Caco-2 (cell line): ENCODE measurements at regions of chrX and their contacts with region 1.

Region 1: DNA sequence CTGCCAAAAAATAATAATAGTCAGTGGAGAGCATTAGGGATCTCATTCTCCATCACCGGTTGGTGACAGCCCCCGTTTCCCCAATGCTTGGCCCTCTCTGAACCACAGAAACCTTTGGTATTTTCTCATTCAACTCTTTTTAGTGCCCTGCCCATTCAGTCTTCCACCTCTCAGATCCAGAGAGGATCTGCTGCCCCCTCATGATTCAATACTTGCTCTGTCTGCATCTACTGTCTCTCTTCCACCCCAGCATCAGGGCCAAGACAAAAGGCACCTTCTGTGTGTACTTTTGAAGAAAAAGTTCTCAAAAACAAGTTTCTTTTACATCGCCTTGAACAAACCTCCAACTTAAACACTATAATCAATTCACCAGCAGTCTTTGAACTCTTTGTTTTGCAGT is 19.3 kb downstream of the CLTRN start:
- DNase-seq: peak in 1 of 2 experiments; percentile 2
- H3K4me3 ChIP-seq: no peak overlapping the region
- H3K4me3 Mint-ChIP-seq: no peak overlapping the region
- H3K27ac Mint-ChIP-seq: no peak overlapping the region
- H3K4me1 ChIP-seq: no peaks in the 10 kb centered on the region
- H3K4me1 Mint-ChIP-seq: no peaks in the 10 kb centered on the region
- H3K27me3 ChIP-seq: no peaks in the 10 kb centered on the region
- H3K27me3 Mint-ChIP-seq: no peaks in the 10 kb centered on the region
- CTCF ChIP-seq: no peak

Region 2: DNA sequence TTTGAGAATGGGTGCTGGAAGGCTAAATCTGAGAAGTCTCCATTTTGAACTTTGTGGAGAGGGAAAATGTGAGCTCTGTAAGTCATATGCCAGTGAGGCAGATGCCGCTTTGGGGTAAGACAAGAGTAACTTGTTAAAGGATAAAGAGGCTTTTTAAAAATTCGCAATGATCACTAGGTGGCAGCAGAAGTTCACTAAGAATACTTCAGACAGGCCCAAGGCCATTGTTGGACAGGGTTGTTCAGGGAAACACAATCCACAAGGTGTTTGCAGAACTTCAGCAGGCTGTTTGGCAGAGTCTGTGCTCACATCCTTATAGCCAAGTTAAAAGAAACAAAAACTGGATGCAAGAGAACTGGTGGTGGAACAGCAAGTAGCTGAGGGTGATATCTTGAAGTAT is 296.2 kb before region 1 on chrX:
- CTCF ChIA-PET with region 1: no interaction called
- POLR2A ChIA-PET with region 1: no interaction called
- intact Hi-C with region 1: loop called (anchors 10 kb)
- DNase-seq: peak; percentile 38 to 49
- H3K4me3 ChIP-seq: no peak overlapping the region
- H3K4me3 Mint-ChIP-seq: no peak overlapping the region
- H3K27ac Mint-ChIP-seq: no peak overlapping the region
- H3K4me1 ChIP-seq: no peaks in the 10 kb centered on the region
- H3K4me1 Mint-ChIP-seq: no peaks in the 10 kb centered on the region
- H3K27me3 ChIP-seq: no peaks in the 10 kb centered on the region
- H3K27me3 Mint-ChIP-seq: peaks cover 6% of the 10 kb centered on the region
- CTCF ChIP-seq: peak; percentile 24 to 29

Region 3: DNA sequence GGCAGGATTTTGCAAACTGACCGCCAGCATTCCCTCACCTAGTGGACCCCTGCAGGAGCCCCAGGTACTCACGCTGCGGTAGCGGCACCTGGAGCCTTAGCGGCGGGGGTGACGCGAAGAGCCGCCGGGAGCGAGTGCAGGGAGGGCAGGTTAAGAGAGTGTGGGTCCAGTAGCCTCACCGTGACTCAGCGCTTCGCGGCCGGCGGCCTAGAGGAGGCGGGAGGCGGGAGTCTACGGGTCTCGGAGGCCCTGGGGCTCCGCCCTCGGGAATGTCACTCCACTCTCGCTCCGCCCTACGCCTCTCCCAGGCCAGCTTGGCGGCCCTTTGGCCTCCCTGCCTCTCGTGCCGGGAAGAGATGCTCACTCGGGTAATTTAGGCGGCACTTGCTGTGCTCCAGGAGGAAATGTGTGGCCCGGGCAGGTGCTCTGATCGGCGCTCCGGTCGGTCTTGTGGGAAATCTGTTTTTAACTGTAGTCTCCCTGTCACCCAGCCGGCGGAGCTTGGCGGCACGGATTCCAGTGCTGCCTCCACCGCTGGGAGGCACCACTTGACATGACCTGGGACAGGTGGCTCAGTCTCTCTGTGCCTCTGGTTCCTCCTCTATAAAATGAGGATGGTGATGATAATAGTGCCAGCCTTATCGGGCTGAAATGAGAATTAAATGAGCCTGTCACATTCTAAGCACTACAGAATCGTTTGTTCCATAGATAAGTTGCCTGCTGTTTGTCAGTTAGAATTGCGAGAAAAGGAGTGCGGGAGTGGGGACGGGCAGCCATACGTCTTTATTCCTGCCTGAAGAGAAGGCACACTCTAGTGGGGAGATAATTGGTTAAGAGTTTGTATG is 151.9 kb before region 1 on chrX and contains the start of gene PIR:
- CTCF ChIA-PET with region 1: no interaction called
- POLR2A ChIA-PET with region 1: no interaction called
- intact Hi-C with region 1: loop called (anchors 5 kb)
- DNase-seq: peak; percentile 90 to 91
- H3K4me3 ChIP-seq: peak within 1 kb of the TSS; percentile 53
- H3K4me3 Mint-ChIP-seq: peak within 1 kb of the TSS; percentile 82
- H3K27ac Mint-ChIP-seq: peak within 1 kb of the TSS; percentile 68
- H3K4me1 ChIP-seq: 0 out of 2 replicates have a peak, but pooled peaks cover 6% of the 10 kb centered on the region
- H3K4me1 Mint-ChIP-seq: peaks cover 6% of the 10 kb centered on the region
- H3K27me3 ChIP-seq: no peaks in the 10 kb centered on the region
- H3K27me3 Mint-ChIP-seq: no peaks in the 10 kb centered on the region
- CTCF ChIP-seq: peak in 1 of 2 experiments; percentile 57
- total RNA-seq, gene PIR: 12.0 and 15.7 TPM in 2 replicates

Region 4: DNA sequence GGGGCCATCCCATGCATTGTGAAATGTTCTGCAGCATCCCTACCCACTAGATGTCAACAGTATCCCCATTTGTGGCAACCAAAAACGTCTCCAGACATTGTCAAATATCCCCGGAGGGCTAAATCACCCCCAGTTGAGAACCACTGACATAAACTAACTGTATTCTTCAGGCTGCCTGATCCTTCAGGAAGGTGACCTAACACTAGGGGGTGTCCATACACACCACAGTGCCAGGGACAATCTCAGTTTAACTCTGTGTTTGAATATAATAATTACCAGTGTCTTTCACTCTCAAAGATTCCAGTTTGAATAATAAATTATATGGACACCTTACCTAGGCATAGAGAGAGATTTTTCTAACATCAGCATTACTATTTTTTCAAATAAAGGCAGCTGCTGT is 50.9 kb before region 1 on chrX:
- CTCF ChIA-PET with region 1: no interaction called
- POLR2A ChIA-PET with region 1: no interaction called
- intact Hi-C with region 1: loop called (anchors 2 kb)
- DNase-seq: peak in 1 of 2 experiments; percentile 15
- H3K4me3 ChIP-seq: no peak overlapping the region
- H3K4me3 Mint-ChIP-seq: no peak overlapping the region
- H3K27ac Mint-ChIP-seq: no peak overlapping the region
- H3K4me1 ChIP-seq: peaks cover 13% of the 10 kb centered on the region
- H3K4me1 Mint-ChIP-seq: no peaks in the 10 kb centered on the region
- H3K27me3 ChIP-seq: no peaks in the 10 kb centered on the region
- H3K27me3 Mint-ChIP-seq: peaks cover 11% of the 10 kb centered on the region
- CTCF ChIP-seq: peak in 1 of 2 experiments; percentile 48

Region 5: DNA sequence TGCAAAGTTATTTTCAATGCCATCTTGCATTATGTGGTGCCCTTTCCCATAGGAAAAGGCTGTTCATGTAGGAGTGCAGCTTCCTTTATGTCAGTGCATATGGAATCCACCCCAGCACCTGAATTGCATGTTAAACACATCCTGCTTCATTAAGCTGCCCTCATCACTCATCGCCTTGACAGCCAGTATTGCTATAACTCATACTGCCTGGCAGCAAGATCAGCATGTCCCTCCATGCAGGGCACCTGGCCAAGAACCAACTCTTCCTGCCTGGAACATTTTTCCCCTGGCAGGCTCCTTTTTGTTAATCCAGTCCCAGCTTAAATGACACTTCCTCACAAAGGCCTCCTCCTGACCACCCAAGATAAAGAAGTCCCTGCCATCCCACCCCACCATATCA is 69.3 kb after region 1 on chrX:
- CTCF ChIA-PET with region 1: no interaction called
- POLR2A ChIA-PET with region 1: no interaction called
- intact Hi-C with region 1: no loop called
- DNase-seq: no peak
- H3K4me3 ChIP-seq: no peak overlapping the region
- H3K4me3 Mint-ChIP-seq: no peak overlapping the region
- H3K27ac Mint-ChIP-seq: no peak overlapping the region
- H3K4me1 ChIP-seq: peaks cover 5% of the 10 kb centered on the region; the same call in 1 of the 2 replicates
- H3K4me1 Mint-ChIP-seq: no peaks in the 10 kb centered on the region
- H3K27me3 ChIP-seq: no peaks in the 10 kb centered on the region
- H3K27me3 Mint-ChIP-seq: no peaks in the 10 kb centered on the region
- CTCF ChIP-seq: no peak